ENCODE measurements at regions of chr6 and their contacts with region 1.

Region 1: GRCh38 chr6:46090115-46091079 is 39.4 kb upstream of the ENPP4 start:
- DNase-seq: peak; percentile 17 to 77 (median 42)
- ATAC-seq: no peak
- H3K4me3 ChIP-seq: no peak overlapping the region
- H3K4me3 Mint-ChIP-seq: no peak overlapping the region
- H3K27ac ChIP-seq: no peak overlapping the region
- H3K27ac Mint-ChIP-seq: no peak overlapping the region
- H3K4me1 ChIP-seq: no peaks in the 10 kb centered on the region
- H3K4me1 Mint-ChIP-seq: no peaks in the 10 kb centered on the region
- H3K27me3 ChIP-seq: peaks cover 5 to 18% of the 10 kb centered on the region in 2 experiments
- H3K27me3 Mint-ChIP-seq: peaks cover 65% of the 10 kb centered on the region
- CTCF ChIP-seq: peak; percentile 90

Region 2: GRCh38 chr6:44475779-44476434 is 1614.5 kb before region 1 on chr6:
- CTCF ChIA-PET with region 1: no interaction called
- POLR2A ChIA-PET with region 1: no interaction called
- intact Hi-C with region 1: loop called in 1 of 2 experiments (anchors 5 kb)
- DNase-seq: peak; percentile 41 to 80 (median 62)
- ATAC-seq: peak; percentile 89
- H3K4me3 ChIP-seq: no peak overlapping the region
- H3K4me3 Mint-ChIP-seq: no peak overlapping the region
- H3K27ac ChIP-seq: no peak overlapping the region
- H3K27ac Mint-ChIP-seq: no peak overlapping the region
- H3K4me1 ChIP-seq: peaks cover 9% of the 10 kb centered on the region
- H3K4me1 Mint-ChIP-seq: peaks cover 5% of the 10 kb centered on the region
- H3K27me3 ChIP-seq: peaks cover 0 to 5% of the 10 kb centered on the region in 2 experiments
- H3K27me3 Mint-ChIP-seq: no peaks in the 10 kb centered on the region
- CTCF ChIP-seq: peak; percentile 85

Region 3: GRCh38 chr6:46410334-46410953 is 320.0 kb after region 1 on chr6:
- CTCF ChIA-PET with region 1: interaction called, 16 read pairs
- POLR2A ChIA-PET with region 1: interaction called, 7 read pairs
- intact Hi-C with region 1: loop called in 1 of 2 experiments (anchors 1 kb)
- DNase-seq: peak in 4 of 14 experiments; percentile 2 to 77 (median 66)
- ATAC-seq: no peak
- H3K4me3 ChIP-seq: no peak overlapping the region
- H3K4me3 Mint-ChIP-seq: no peak overlapping the region
- H3K27ac ChIP-seq: no peak overlapping the region
- H3K27ac Mint-ChIP-seq: no peak overlapping the region
- H3K4me1 ChIP-seq: no peaks in the 10 kb centered on the region
- H3K4me1 Mint-ChIP-seq: no peaks in the 10 kb centered on the region
- H3K27me3 ChIP-seq: no peaks in the 10 kb centered on the region
- H3K27me3 Mint-ChIP-seq: no peaks in the 10 kb centered on the region
- CTCF ChIP-seq: peak; percentile 60

Region 4: DNA sequence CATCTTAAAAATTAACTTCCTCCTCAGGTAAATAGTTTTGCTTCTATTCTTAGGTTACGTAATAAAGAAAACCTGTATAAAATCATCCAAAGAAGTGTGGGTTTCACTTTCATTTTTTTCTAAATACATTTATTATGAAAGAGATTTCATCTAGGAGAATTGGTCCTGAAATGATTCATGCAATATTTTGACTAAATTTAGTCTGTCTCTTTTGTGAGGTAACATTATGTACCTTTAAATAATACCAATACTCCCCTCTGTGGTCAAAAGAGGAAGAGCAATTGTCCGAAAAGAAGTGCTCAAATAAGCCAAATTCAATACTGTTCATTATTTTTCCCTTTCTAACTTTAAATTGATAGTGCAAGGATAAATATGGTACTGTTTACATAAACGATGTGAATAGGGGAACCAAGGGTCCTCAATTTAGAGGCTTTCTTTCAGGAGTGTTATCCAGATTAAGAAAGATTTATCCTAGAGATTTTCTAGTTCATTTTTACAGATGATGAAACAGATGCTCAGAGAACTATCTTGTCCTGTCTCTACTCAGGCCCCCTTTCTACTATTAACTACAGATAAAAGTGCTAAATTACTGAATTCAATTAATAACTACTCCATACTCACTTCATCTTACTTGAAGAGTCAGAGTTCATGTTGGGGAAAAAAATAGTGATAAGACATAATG is 536.0 kb after region 1 on chr6:
- CTCF ChIA-PET with region 1: no interaction called
- POLR2A ChIA-PET with region 1: no interaction called
- intact Hi-C with region 1: loop called (anchors 1 kb)
- DNase-seq: peak in 3 of 14 experiments; percentile 14 to 35 (median 32)
- ATAC-seq: no peak
- H3K4me3 ChIP-seq: no peak overlapping the region
- H3K4me3 Mint-ChIP-seq: peak overlapping the region; percentile 54
- H3K27ac ChIP-seq: no peak overlapping the region
- H3K27ac Mint-ChIP-seq: no peak overlapping the region
- H3K4me1 ChIP-seq: no peaks in the 10 kb centered on the region
- H3K4me1 Mint-ChIP-seq: peaks cover 5% of the 10 kb centered on the region
- H3K27me3 ChIP-seq: peaks cover 0 to 12% of the 10 kb centered on the region in 2 experiments
- H3K27me3 Mint-ChIP-seq: peaks cover 24% of the 10 kb centered on the region
- CTCF ChIP-seq: peak; percentile 65

Region 5: DNA sequence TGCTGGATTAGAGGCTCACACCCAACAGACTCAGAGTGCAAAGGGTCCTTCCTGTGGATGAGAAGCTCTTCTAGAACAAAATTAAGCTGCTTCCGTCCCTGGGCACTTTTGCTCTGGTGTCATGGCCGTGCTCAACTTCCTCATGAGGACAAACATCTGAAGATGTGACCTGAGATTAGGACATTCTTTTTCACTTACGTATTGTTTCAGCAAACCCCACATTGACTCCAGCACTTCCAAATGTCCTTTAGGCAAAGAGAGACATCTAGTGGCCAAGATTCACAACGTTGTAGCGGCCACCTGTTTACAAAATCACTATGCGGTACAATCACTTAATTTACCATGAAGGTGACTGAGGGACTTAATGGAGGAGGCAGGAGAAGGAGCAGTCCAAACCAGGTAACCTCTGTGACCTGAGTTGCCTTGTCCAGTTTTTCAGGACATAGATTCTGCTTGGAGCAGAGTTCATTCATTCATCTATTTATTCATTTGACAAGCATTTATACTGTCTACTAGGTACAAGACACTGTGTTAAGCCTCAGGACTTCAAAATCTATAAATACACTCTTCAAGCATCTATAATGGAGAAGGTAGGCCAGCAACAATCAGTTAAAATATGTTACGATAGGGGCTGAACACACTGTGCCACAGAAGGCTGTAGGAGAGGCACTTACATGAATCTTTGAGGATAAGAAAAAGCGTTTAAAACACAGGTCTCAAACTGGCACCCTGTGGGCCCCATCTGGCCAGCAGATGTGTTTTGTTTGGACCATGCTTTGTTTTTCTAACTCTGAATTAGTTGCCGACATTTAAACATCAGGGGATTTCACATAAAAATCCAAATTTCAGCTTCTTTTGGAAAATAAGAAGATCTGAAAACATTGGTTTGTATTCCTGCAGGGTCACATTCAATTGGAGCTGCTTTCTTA is 957.3 kb after region 1 on chr6:
- CTCF ChIA-PET with region 1: no interaction called
- POLR2A ChIA-PET with region 1: no interaction called
- intact Hi-C with region 1: loop called in 1 of 2 experiments (anchors 2 kb)
- DNase-seq: peak in 5 of 14 experiments; percentile 6 to 45 (median 28)
- ATAC-seq: no peak
- H3K4me3 ChIP-seq: no peak overlapping the region
- H3K4me3 Mint-ChIP-seq: no peak overlapping the region
- H3K27ac ChIP-seq: no peak overlapping the region
- H3K27ac Mint-ChIP-seq: no peak overlapping the region
- H3K4me1 ChIP-seq: no peaks in the 10 kb centered on the region
- H3K4me1 Mint-ChIP-seq: no peaks in the 10 kb centered on the region
- H3K27me3 ChIP-seq: no peaks in the 10 kb centered on the region
- H3K27me3 Mint-ChIP-seq: peaks cover 14% of the 10 kb centered on the region
- CTCF ChIP-seq: peak; percentile 61